ENCODE measurements at regions of chr1 and their contacts with region 1.

Region 1: DNA sequence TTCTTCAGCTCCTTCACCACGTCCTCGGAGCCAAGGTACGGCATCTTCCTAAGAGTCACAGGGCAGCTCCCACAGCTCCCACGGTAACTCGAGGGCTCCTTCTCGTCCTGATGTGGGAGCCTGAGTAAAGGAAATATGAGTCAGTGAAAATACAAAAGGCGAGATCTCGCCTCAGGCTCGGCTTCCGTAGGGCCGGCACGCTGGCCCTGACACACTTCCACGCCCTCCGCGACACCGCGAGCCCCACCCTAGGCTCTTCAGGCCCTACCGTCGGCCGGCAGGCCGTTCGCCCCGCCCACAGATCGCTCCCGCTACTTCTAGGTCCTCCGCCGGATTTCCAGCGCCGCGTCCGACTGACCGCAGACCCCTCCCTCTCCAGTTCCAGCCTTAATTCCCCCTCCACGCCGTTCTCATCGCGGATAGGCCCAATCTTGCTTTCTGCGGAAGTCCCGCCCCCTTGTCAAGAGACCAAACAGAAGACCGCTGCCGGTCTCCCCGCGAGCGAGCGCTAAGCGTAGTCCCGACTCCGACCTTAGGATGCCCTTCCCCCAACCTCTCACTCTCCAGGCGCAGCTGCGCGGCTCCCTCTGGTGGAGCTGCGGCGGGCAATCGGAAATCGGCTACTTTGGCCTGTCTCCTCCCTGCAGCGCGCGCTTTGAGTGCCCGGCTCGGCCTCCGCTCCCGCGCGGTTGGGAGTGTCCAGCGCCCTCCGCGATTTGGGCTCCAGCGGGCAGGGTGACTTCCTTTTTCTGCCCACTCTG is at the starts of genes AP4B1 and DCLRE1B:
- DNase-seq: peak; percentile 99
- ATAC-seq: peak; percentile 93
- H3K4me3 Mint-ChIP-seq: peak within 1 kb of the TSS; percentile 88
- H3K27ac Mint-ChIP-seq: peak within 1 kb of the TSS; percentile 99
- H3K4me1 Mint-ChIP-seq: peaks cover 51% of the 10 kb centered on the region
- H3K27me3 Mint-ChIP-seq: no peaks in the 10 kb centered on the region
- CTCF ChIP-seq: no peak
- total RNA-seq, gene AP4B1: 38.2 to 38.5 TPM
- total RNA-seq, gene DCLRE1B: 19.1 to 19.3 TPM

Region 2: DNA sequence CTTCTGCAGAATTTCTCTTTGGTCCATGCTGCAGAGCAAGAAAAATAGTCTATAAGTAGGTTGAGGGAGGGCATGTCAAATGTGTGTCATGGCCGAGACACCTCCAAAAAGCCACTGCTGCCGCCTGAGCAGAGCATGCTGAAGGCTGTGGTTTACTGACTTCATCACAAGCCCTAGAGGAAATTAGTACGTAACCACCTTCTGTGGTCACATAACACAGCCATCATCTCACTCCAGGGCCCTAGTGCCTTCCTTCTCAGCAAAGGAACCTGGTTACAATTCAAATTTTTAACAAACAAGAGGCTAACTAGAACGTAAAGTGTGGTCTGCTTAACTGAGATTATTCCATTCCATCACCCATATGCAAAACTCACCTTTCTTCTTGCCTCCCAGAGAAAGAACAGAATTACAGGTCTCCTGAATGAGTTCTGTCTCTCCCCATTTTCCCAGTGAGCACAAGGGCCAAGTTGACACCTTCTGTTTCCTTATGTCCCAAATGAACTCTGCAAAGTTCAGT is 33.2 kb before region 1 on chr1 and contains the start of gene PTPN22:
- CTCF ChIA-PET with region 1: interaction called, 15 read pairs
- POLR2A ChIA-PET with region 1: interaction called, 18 read pairs
- intact Hi-C with region 1: loop called (anchors 1 kb)
- DNase-seq: peak; percentile 91
- ATAC-seq: peak; percentile 79
- H3K4me3 Mint-ChIP-seq: peak within 1 kb of the TSS; percentile 91
- H3K27ac Mint-ChIP-seq: peak within 1 kb of the TSS; percentile 98
- H3K4me1 Mint-ChIP-seq: peaks cover 61% of the 10 kb centered on the region
- H3K27me3 Mint-ChIP-seq: no peaks in the 10 kb centered on the region
- CTCF ChIP-seq: no peak
- total RNA-seq, gene PTPN22: 54.0 to 56.0 TPM

Region 3: DNA sequence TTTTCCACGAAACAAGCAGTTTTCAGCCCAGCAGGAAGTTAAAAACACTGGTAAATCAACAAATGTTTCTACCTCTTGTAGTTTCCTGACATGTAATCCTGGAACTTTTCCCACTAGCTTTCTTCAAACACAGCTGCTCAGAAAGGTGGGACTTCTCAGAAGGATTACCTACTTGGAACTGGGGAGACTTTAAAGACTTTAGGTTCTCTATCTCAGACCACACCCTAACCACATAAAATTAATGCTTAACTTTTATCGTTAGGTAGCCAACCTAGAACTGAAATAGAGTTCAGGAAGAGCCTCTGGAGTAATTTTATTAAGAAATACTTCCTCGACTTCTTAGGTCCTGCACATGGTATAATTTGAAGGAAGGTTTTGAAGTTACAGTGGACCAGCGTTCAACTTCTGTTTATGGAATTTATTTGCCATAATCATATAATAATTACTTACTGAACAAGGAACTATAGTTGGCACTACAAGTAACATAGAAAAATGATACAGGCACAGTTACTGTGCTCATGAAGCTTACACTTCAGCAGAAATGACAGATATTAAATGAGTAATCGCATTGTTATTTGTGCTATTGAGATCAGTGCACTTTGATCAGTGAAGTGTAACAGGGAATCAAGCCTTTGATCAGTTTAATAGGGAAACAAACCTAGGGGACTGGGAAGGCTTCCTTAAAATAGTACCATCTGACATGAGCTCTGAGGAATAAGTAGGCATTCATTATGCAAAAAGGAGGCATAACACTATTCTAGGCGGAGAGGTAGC is 17.3 kb before region 1 on chr1 and contains the start of gene BCL2L15:
- CTCF ChIA-PET with region 1: interaction called, 5 read pairs
- POLR2A ChIA-PET with region 1: interaction called, 16 read pairs
- intact Hi-C with region 1: no loop called
- DNase-seq: no peak
- ATAC-seq: no peak
- H3K4me3 Mint-ChIP-seq: no peak within 1 kb of the TSS
- H3K27ac Mint-ChIP-seq: no peak within 1 kb of the TSS
- H3K4me1 Mint-ChIP-seq: peaks cover 11% of the 10 kb centered on the region
- H3K27me3 Mint-ChIP-seq: no peaks in the 10 kb centered on the region
- CTCF ChIP-seq: no peak
- total RNA-seq, gene BCL2L15: 0.40 to 0.61 TPM

Region 4: DNA sequence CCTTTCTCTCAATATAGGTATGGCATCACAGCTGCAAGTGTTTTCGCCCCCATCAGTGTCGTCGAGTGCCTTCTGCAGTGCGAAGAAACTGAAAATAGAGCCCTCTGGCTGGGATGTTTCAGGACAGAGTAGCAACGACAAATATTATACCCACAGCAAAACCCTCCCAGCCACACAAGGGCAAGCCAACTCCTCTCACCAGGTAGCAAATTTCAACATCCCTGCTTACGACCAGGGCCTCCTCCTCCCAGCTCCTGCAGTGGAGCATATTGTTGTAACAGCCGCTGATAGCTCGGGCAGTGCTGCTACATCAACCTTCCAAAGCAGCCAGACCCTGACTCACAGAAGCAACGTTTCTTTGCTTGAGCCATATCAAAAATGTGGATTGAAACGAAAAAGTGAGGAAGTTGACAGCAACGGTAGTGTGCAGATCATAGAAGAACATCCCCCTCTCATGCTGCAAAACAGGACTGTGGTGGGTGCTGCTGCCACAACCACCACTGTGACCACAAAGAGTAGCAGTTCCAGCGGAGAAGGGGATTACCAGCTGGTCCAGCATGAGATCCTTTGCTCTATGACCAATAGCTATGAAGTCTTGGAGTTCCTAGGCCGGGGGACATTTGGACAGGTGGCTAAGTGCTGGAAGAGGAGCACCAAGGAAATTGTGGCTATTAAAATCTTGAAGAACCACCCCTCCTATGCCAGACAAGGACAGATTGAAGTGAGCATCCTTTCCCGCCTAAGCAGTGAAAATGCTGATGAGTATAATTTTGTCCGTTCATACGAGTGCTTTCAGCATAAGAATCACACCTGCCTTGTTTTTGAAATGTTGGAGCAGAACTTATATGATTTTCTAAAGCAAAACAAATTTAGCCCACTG is 35.8 kb after region 1 on chr1:
- CTCF ChIA-PET with region 1: no interaction called
- POLR2A ChIA-PET with region 1: interaction called, 10 read pairs
- intact Hi-C with region 1: no loop called
- DNase-seq: peak; percentile 85
- ATAC-seq: peak; percentile 71
- H3K4me3 Mint-ChIP-seq: peak overlapping the region; percentile 73
- H3K27ac Mint-ChIP-seq: peak overlapping the region; percentile 95
- H3K4me1 Mint-ChIP-seq: peaks cover 75% of the 10 kb centered on the region
- H3K27me3 Mint-ChIP-seq: no peaks in the 10 kb centered on the region
- CTCF ChIP-seq: no peak

Measured in activated CD8-positive, alpha-beta T cell treated with anti-CD3 and anti-CD28 coated beads for 36 hours (primary cell).